Panc1 (cell line): ENCODE measurements at regions of chr11 and their contacts with region 1.

Region 1: DNA sequence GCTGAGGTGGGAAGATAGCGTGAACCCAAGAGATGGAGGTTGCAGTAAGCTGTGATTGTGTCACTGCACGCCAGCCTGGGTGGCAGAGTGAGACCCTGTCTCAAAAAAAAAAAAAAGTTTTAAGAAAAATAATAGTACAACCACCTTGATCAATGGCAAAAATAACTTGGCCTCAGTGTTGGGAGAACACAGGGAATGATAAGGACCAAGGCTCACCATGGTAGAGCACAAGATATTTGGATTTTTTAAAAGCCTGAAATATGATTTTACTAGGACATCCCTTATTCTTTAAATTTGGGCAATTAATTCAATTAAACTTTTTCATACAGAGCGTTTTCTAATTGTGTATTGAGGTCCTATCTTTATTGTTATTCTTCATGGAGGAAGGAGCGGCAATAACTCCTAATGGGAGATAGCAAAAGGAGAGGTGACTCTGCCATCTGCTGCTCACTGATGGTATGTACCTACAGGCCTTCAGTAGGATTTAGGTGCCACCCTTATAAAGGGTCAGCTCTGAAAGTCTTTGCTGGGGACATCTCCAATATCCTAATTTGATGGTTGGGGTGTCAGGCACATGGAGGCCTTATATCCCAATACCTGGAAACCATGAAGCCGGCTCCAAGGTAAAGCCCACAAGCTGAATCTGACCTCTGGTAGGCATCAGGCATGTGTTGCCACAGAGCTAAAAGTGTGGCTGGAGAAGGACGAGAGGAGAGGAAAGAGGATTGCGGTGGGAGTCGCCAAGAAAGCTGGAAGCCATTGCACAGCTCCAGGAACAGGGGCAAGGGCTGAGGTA is 21.9 kb upstream of the POLD3 start:
- DNase-seq: peak; percentile 25
- ATAC-seq: peak; percentile 96
- H3K4me3 ChIP-seq: no peak overlapping the region
- H3K27ac ChIP-seq: no peak overlapping the region
- H3K4me1 ChIP-seq: no peaks in the 10 kb centered on the region
- H3K27me3 ChIP-seq: no peaks in the 10 kb centered on the region; the same call in 1 of the 2 replicates
- CTCF ChIP-seq: peak; percentile 88

Region 2: GRCh38 chr11:72718101-72718501 is 1852.4 kb before region 1 on chr11:
- CTCF ChIA-PET with region 1: interaction called, 10 read pairs
- POLR2A ChIA-PET with region 1: no interaction called
- in situ Hi-C with region 1: no loop called
- intact Hi-C with region 1: no loop called
- DNase-seq: no peak
- ATAC-seq: no peak
- H3K4me3 ChIP-seq: no peak overlapping the region
- H3K27ac ChIP-seq: no peak overlapping the region
- H3K4me1 ChIP-seq: peaks cover 19% of the 10 kb centered on the region
- H3K27me3 ChIP-seq: no peaks in the 10 kb centered on the region
- CTCF ChIP-seq: no peak

Region 3: GRCh38 chr11:74449369-74449931 is 121.0 kb before region 1 on chr11:
- CTCF ChIA-PET with region 1: interaction called, 43 read pairs
- POLR2A ChIA-PET with region 1: no interaction called
- in situ Hi-C with region 1: no loop called
- intact Hi-C with region 1: loop called (anchors 1 kb)
- DNase-seq: peak; percentile 65
- ATAC-seq: peak; percentile 87
- H3K4me3 ChIP-seq: no peak overlapping the region
- H3K27ac ChIP-seq: no peak overlapping the region
- H3K4me1 ChIP-seq: no peaks in the 10 kb centered on the region
- H3K27me3 ChIP-seq: peaks cover 2% of the 10 kb centered on the region; the same call in 1 of the 2 replicates
- CTCF ChIP-seq: peak; percentile 86

Region 4: GRCh38 chr11:74543991-74544390 is 26.5 kb before region 1 on chr11:
- CTCF ChIA-PET with region 1: no interaction called
- POLR2A ChIA-PET with region 1: no interaction called
- in situ Hi-C with region 1: no loop called
- intact Hi-C with region 1: no loop called
- DNase-seq: no peak
- ATAC-seq: no peak
- H3K4me3 ChIP-seq: no peak overlapping the region
- H3K27ac ChIP-seq: no peak overlapping the region
- H3K4me1 ChIP-seq: no peaks in the 10 kb centered on the region
- H3K27me3 ChIP-seq: peaks cover 3% of the 10 kb centered on the region
- CTCF ChIP-seq: no peak